GM18951 (cell line): ENCODE measurements at regions of chr15 and their contacts with region 1.

Region 1: DNA sequence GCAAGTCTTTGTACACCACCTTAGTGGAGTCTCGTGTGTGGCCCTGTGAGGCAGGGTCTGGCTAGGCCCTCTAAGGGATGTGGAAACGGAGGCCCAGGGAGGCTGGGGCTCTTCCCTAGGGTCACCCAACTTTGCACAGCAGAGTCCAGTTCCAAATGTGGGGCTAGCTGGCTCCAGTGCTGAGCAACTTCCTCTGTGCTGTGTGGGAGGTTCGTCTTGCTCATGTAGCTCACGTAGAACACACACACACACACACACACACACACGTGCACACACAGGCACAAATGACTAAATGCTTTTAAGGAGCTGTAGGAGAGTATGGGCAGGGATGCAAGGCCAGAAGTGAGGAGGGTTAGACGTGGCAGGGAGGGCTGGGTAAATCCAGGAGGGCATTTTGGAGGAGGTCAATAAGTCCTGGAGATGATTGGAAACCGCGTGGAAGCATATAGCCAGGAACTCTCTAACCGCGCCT is 213.8 kb downstream of the RPLP1 start:
- POLR2A ChIP-seq: no peak

Region 2: GRCh38 chr15:69380100-69380727 is 286.2 kb before region 1 on chr15:
- in situ Hi-C with region 1: no loop called
- POLR2A ChIP-seq: no peak

Region 3: GRCh38 chr15:69704700-69705099 is 38.3 kb after region 1 on chr15:
- in situ Hi-C with region 1: loop called (anchors 5 kb)
- POLR2A ChIP-seq: no peak